Heart left ventricle (tissue), 16 donors: ENCODE measurements at regions of chr5 and their contacts with region 1.

Region 1: GRCh38 chr5:132386644-132387286 is 17.3 kb downstream of the SLC22A5 start:
- DNase-seq: peak; percentile 71 to 85 (median 77)
- ATAC-seq: peak; percentile 79 to 86 (median 80)
- H3K4me3 ChIP-seq: no peak overlapping the region
- H3K27ac ChIP-seq: peak overlapping the region; percentile 69 to 90 (median 86)
- H3K4me1 ChIP-seq: peaks cover 0 to 63% (median 49%) of the 10 kb centered on the region in 12 donors
- H3K27me3 ChIP-seq: no peaks in the 10 kb centered on the region
- CTCF ChIP-seq: peak; percentile 69 to 92 (median 82)
- POLR2A ChIP-seq: no peak

Region 2: DNA sequence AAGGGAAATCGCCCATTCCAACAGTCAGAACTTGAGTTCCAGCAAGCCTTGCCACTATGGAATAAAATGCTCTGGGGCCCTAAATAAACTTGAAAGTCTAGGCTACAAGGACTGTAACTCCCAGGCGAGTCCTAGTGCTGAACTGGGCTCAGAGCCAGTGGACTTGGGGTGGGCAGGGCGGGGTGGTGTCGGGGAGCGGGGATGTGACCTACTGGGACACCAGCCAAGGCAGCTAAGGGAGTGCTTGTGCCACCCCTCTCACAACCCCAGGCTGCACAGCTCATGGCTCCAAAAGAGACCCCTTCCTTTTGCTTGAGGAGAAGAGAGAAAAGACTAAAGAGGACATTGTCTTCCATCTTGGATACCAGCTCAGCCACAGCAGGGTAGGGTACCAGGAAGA is 502.8 kb before region 1 on chr5:
- intact Hi-C with region 1: no loop called
- DNase-seq: no peak
- ATAC-seq: no peak
- H3K4me3 ChIP-seq: no peak overlapping the region
- H3K27ac ChIP-seq: no peak overlapping the region
- H3K4me1 ChIP-seq: no peaks in the 10 kb centered on the region
- H3K27me3 ChIP-seq: no peaks in the 10 kb centered on the region
- CTCF ChIP-seq: no peak
- POLR2A ChIP-seq: no peak

Region 3: GRCh38 chr5:132064738-132065331 is 321.9 kb before region 1 on chr5:
- intact Hi-C with region 1: loop called in 2 of 10 experiments (anchors 10 kb)
- DNase-seq: peak; percentile 49 to 76 (median 64)
- ATAC-seq: peak; percentile 57 to 77 (median 71)
- H3K4me3 ChIP-seq: no peak overlapping the region
- H3K27ac ChIP-seq: no peak overlapping the region
- H3K4me1 ChIP-seq: no peaks in the 10 kb centered on the region
- H3K27me3 ChIP-seq: no peaks in the 10 kb centered on the region
- CTCF ChIP-seq: peak; percentile 73 to 95 (median 87)
- POLR2A ChIP-seq: no peak

Region 4: GRCh38 chr5:132495667-132496190 is 109.0 kb after region 1 on chr5:
- intact Hi-C with region 1: loop called in 3 of 10 experiments (anchors 2 kb)
- DNase-seq: peak; percentile 93 to 96 (median 95)
- ATAC-seq: peak; percentile 69 to 80 (median 76)
- H3K4me3 ChIP-seq: peak overlapping the region; percentile 27 to 88 (median 68)
- H3K27ac ChIP-seq: peak overlapping the region; percentile 79 to 99 (median 93)
- H3K4me1 ChIP-seq: peaks cover 4 to 92% (median 44%) of the 10 kb centered on the region in 12 donors
- H3K27me3 ChIP-seq: no peaks in the 10 kb centered on the region
- CTCF ChIP-seq: peak in 5 of 12 donors; percentile 9 to 38 (median 24)
- POLR2A ChIP-seq: peak in 1 of 2 donors; percentile 52

Region 5: DNA sequence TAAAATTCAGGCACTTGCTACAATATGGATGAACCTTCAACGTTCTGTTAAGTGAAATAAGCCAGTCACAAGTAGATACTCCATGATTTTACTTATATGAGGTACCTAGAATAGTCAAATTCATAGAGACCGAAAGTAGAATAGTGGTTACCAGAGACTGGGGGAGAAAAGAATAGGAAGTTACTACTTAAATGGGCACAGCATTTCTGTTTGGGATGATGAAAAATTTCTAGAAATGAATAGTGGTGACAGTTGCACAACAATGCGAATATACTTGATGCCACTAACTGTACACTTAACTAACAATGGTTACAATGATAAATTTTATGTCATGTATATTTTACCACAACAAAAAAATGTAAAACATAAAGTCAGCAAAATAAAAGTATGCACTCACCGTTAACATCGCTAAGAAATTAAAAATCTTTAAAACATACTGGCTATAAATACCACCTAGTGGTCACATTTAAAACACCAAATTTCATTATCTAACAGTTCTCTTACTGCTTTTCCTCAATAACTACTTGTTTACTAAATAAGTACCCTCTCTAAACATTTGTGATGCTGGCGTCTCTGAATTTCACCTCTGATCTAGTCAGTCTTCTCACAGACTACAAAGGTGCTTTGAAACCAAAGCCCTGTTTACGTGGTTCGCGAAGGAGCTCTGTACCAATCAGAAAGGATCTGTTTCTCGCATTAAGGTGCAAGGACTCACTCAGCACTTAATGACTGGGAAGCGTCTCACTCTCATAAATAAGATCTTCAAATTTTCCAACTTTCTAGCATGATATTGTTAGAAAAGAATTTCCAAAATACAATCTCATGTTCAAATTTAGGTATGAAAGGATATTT is 327.9 kb after region 1 on chr5:
- intact Hi-C with region 1: loop called in 3 of 10 experiments (anchors 5 to 10 kb)
- DNase-seq: no peak
- ATAC-seq: no peak
- H3K4me3 ChIP-seq: no peak overlapping the region
- H3K27ac ChIP-seq: no peak overlapping the region
- H3K4me1 ChIP-seq: peaks cover 0 to 4% (median 0%) of the 10 kb centered on the region in 12 donors
- H3K27me3 ChIP-seq: no peaks in the 10 kb centered on the region
- CTCF ChIP-seq: peak in 11 of 12 donors; percentile 17 to 56 (median 41)
- POLR2A ChIP-seq: no peak

Region 6: GRCh38 chr5:132883261-132883834 is 496.6 kb after region 1 on chr5:
- intact Hi-C with region 1: loop called in 1 of 10 experiments (anchors 10 kb)
- DNase-seq: peak in 4 of 5 donors; percentile 42 to 61 (median 46)
- ATAC-seq: peak; percentile 77 to 88 (median 84)
- H3K4me3 ChIP-seq: no peak overlapping the region
- H3K27ac ChIP-seq: no peak overlapping the region
- H3K4me1 ChIP-seq: peaks cover 0 to 4% (median 0%) of the 10 kb centered on the region in 12 donors
- H3K27me3 ChIP-seq: no peaks in the 10 kb centered on the region
- CTCF ChIP-seq: peak; percentile 50 to 80 (median 67)
- POLR2A ChIP-seq: no peak